ENCODE measurements at regions of chr10 and their contacts with region 1.

Region 1: GRCh38 chr10:68247931-68248330 is 16.0 kb upstream of the ATOH7 start:
- DNase-seq: no peak
- ATAC-seq: no peak
- H3K4me3 ChIP-seq: no peak overlapping the region
- H3K27ac ChIP-seq: no peak overlapping the region
- H3K4me1 ChIP-seq: no peaks in the 10 kb centered on the region
- H3K27me3 ChIP-seq: no peaks in the 10 kb centered on the region
- CTCF ChIP-seq: no peak

Region 2: GRCh38 chr10:68212721-68213352 is 35.1 kb before region 1 on chr10:
- CTCF ChIA-PET with region 1: no interaction called
- POLR2A ChIA-PET with region 1: no interaction called
- in situ Hi-C with region 1: no loop called
- intact Hi-C with region 1: no loop called
- DNase-seq: no peak
- ATAC-seq: no peak; the same call in 1 of the 2 replicates
- H3K4me3 ChIP-seq: no peak overlapping the region
- H3K27ac ChIP-seq: no peak overlapping the region
- H3K4me1 ChIP-seq: no peaks in the 10 kb centered on the region
- H3K27me3 ChIP-seq: no peaks in the 10 kb centered on the region
- CTCF ChIP-seq: peak; percentile 81

Region 3: DNA sequence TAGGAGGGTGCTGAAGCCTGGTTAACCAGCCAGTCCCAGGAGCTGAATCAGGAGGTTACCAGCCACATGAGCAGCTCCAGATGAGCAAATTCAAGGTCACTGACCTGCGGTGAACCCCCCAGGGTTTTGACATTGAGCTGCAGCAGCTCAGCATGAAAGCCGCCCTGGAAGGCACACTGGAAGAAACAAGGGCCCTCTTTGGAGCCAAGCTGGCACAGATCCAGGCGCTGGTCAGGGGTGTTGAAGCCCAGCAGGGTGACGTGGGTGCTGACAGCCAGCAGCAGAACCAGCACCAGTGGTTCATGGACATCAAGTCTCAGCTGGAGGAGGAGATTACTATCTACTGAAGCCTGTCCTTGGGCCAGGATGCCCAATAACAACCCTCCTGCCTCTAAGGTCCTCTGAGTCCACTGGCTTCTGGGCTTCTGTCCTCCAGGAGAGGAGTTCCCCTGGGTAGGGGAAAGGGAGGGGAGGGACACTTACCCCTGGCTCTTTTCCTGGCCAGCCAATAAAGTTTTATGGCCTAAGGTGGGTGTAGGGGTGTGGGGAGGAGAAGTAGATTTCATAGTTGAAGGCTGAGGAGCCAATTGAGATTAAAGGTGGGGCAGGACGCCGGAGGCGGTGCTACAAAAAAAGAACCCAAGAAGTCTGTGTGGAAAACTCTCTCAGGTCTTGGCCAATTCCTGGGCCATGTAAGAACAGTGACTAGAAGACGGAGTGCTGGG is 13.4 kb after region 1 on chr10:
- CTCF ChIA-PET with region 1: no interaction called
- POLR2A ChIA-PET with region 1: interaction called, 10 read pairs
- in situ Hi-C with region 1: no loop called
- intact Hi-C with region 1: no loop called
- DNase-seq: no peak
- ATAC-seq: no peak
- H3K4me3 ChIP-seq: no peak overlapping the region
- H3K27ac ChIP-seq: no peak overlapping the region
- H3K4me1 ChIP-seq: no peaks in the 10 kb centered on the region
- H3K27me3 ChIP-seq: no peaks in the 10 kb centered on the region
- CTCF ChIP-seq: no peak